ENCODE measurements at regions of chr16 and their contacts with region 1.

Region 1: DNA sequence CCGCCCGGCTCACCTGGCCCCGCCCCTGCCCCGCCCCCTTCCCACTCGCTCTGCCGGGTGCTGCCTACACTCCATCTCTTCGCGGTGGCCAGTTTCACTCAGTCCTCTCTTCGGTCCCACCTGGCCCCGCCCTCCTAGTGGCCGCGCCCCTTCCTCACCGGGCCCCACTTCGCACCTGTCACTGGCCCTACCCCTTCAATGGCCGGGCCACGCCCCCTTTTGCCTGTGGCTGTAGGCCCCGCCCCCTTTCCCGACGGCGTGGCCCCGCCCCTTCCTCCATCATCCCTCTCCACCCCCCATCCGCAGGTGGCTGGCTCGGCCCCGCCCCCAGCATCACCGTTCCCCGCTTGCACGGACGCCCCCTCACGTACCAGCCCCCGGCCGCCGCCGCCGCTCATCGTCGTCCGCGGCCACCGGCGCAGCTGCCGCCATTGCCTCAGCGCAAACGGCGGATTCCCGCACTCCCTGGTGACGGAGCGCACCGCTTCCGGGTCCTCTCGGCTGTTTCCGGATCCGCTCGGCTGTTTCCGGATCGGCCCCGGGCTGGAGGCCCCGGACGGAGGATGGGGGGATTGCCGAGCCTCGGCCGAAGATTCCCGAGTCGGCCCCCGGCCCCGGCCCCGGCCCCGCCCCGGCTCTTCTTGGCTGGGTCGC is at the start of gene RABEP2:
- DNase-seq: peak; percentile 92 to 99 (median 94)
- H3K4me3 ChIP-seq: peak within 1 kb of the TSS; percentile 66 to 95
- H3K4me3 Mint-ChIP-seq: peak within 1 kb of the TSS; percentile 91 to 96 (median 94)
- H3K27ac ChIP-seq: peak within 1 kb of the TSS; percentile 93
- H3K27ac Mint-ChIP-seq: peak within 1 kb of the TSS; percentile 96 to 100 (median 99)
- H3K4me1 ChIP-seq: peaks cover 12% of the 10 kb centered on the region
- H3K4me1 Mint-ChIP-seq: peaks cover 9 to 27% (median 15%) of the 10 kb centered on the region in 4 donors
- H3K27me3 ChIP-seq: no peaks in the 10 kb centered on the region
- H3K27me3 Mint-ChIP-seq: no peaks in the 10 kb centered on the region
- total RNA-seq, gene RABEP2: 25.7 to 29.0 TPM

Region 2: GRCh38 chr16:28823872-28824716 is 100.8 kb before region 1 on chr16:
- CTCF ChIA-PET with region 1: no interaction called
- POLR2A ChIA-PET with region 1: interaction called, 8 read pairs
- intact Hi-C with region 1: loop called (anchors 1 kb)
- DNase-seq: peak; percentile 94 to 99 (median 95)
- H3K4me3 ChIP-seq: peak overlapping the region; percentile 85 to 97
- H3K4me3 Mint-ChIP-seq: peak overlapping the region; percentile 93 to 99 (median 96)
- H3K27ac ChIP-seq: peak overlapping the region; percentile 98
- H3K27ac Mint-ChIP-seq: peak overlapping the region; percentile 96 to 100 (median 98)
- H3K4me1 ChIP-seq: peaks cover 32% of the 10 kb centered on the region
- H3K4me1 Mint-ChIP-seq: peaks cover 27 to 58% (median 40%) of the 10 kb centered on the region in 4 donors
- H3K27me3 ChIP-seq: no peaks in the 10 kb centered on the region
- H3K27me3 Mint-ChIP-seq: peaks cover 0 to 5% of the 10 kb centered on the region in 2 donors

Region 3: DNA sequence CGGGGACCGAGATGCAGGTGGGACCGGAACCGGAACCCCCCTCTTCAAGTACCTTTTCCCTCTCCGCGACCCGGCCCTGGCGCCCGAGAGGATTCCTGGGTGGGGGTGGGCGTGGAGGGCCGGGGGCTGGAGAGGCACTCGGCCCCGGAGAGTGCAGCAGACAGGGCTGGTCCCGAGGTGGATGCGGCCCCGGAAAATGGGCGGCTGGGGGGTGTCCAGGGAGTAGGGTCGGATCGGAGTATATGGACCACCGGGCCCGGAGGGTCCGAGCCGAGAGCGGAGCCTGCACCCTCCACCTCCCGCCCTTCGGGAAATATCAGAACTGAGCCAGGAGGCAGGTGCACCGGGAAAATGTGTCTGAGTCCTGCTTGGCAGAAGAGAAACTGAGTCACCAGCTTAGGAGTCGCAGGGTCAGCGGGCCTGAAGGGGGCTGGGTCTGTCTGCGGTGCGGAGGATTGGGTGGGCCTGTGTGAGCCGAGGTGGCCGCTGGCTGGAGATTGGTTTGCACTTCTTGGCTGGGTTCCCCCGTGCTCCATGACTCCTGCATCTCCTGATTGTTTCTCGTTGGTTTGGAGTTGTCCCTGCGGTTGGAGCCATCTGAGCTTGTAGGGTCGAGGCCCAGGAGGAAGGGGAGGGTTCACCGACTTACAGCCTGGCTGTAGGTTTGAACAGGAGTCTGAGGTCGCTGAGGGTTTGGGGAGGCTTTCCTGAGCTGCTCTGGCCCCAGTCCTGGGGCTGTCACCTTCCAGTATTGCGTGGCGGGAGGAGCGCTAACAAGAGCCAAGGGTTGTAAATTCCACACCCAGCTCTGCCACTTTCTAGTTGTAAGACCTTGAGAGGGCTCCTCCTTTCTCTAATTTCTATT is 60.7 kb before region 1 on chr16:
- CTCF ChIA-PET with region 1: interaction called, 3 read pairs
- POLR2A ChIA-PET with region 1: interaction called, 28 read pairs
- intact Hi-C with region 1: no loop called
- DNase-seq: peak in 3 of 5 donors; percentile 15 to 62 (median 28)
- H3K4me3 ChIP-seq: peak overlapping the region; percentile 36 to 65
- H3K4me3 Mint-ChIP-seq: peak overlapping the region; percentile 95 to 99 (median 98)
- H3K27ac ChIP-seq: peak overlapping the region; percentile 85
- H3K27ac Mint-ChIP-seq: peak overlapping the region; percentile 95 to 100 (median 98)
- H3K4me1 ChIP-seq: peaks cover 25% of the 10 kb centered on the region
- H3K4me1 Mint-ChIP-seq: peaks cover 16 to 35% (median 22%) of the 10 kb centered on the region in 4 donors
- H3K27me3 ChIP-seq: no peaks in the 10 kb centered on the region
- H3K27me3 Mint-ChIP-seq: no peaks in the 10 kb centered on the region

Region 4: DNA sequence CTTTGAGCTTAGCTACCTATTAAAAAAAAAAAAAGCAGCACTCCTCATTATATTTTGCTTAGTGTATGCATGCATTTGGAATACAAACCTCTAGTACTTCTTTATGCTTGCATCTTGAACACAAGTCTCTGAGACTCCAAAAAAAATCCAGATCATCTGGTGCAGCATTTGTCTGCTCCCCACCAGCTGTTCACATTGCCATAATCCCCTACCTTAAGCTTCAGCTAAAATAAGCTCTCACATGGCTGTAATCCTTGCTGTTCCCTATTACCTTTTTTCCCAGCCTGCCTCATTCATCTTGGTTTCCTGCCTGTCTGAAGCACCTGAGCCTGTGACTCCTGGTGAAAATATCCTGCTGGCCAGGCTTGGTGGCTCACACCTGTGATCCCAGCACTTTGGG is 18.4 kb after region 1 on chr16:
- CTCF ChIA-PET with region 1: interaction called, 20 read pairs
- POLR2A ChIA-PET with region 1: interaction called, 14 read pairs
- intact Hi-C with region 1: no loop called
- DNase-seq: no peak
- H3K4me3 ChIP-seq: no peak overlapping the region
- H3K4me3 Mint-ChIP-seq: no peak overlapping the region
- H3K27ac ChIP-seq: no peak overlapping the region
- H3K27ac Mint-ChIP-seq: peak overlapping the region in 1 of 7 donors; percentile 53
- H3K4me1 ChIP-seq: peaks cover 9% of the 10 kb centered on the region
- H3K4me1 Mint-ChIP-seq: peaks cover 6 to 9% (median 7%) of the 10 kb centered on the region in 4 donors
- H3K27me3 ChIP-seq: no peaks in the 10 kb centered on the region
- H3K27me3 Mint-ChIP-seq: no peaks in the 10 kb centered on the region

Region 5: DNA sequence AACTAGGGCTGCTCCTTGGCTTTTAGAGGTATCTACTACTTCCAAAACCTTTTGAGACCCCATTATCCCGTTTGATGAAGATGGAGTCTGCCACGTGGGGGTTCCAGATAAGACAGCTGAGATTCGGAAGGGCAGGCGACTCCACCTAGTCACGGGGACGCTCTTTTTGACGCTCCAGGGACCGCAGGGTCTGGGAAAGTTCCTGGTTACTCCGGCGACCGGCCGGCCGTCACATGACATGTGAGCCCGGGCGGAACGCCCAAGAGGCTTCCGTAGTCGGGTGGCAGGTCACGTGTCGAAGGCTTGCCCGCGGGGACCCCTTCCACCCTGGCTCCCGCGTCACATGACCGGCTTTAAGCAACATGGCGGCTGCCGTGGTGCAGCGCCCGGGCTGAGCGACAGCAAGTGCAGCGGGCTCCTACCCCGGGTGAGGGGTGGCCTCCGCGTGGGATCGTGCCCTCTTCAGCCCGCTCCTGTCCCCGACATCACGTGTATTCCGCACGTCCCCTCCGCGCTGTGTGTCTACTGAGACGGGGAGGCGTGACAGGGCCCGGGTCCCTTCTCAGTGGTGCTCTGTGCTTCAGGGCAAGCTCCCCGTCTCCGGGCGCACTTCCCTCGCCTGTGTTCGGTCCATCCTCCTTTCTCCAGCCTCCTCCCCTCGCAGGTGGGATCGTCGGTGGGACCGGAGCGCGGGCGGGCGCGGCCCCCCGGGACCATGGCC is 49.7 kb after region 1 on chr16 and contains the start of gene SPNS1:
- CTCF ChIA-PET with region 1: interaction called, 3 read pairs
- POLR2A ChIA-PET with region 1: interaction called, 9 read pairs
- intact Hi-C with region 1: loop called (anchors 2 kb)
- DNase-seq: peak; percentile 84 to 90 (median 86)
- H3K4me3 ChIP-seq: peak within 1 kb of the TSS; percentile 65 to 91
- H3K4me3 Mint-ChIP-seq: peak within 1 kb of the TSS; percentile 97 to 99 (median 98)
- H3K27ac ChIP-seq: peak within 1 kb of the TSS; percentile 71
- H3K27ac Mint-ChIP-seq: peak within 1 kb of the TSS; percentile 93 to 99 (median 97)
- H3K4me1 ChIP-seq: peaks cover 32% of the 10 kb centered on the region
- H3K4me1 Mint-ChIP-seq: peaks cover 29 to 45% (median 36%) of the 10 kb centered on the region in 4 donors
- H3K27me3 ChIP-seq: no peaks in the 10 kb centered on the region
- H3K27me3 Mint-ChIP-seq: no peaks in the 10 kb centered on the region
- total RNA-seq, gene SPNS1: 31.0 to 34.4 TPM

Region 6: GRCh38 chr16:29182501-29182900 is 257.6 kb after region 1 on chr16:
- CTCF ChIA-PET with region 1: no interaction called
- POLR2A ChIA-PET with region 1: no interaction called
- intact Hi-C with region 1: no loop called
- DNase-seq: no peak
- H3K4me3 ChIP-seq: no peak overlapping the region
- H3K4me3 Mint-ChIP-seq: no peak overlapping the region
- H3K27ac ChIP-seq: no peak overlapping the region
- H3K27ac Mint-ChIP-seq: no peak overlapping the region
- H3K4me1 ChIP-seq: no peaks in the 10 kb centered on the region
- H3K4me1 Mint-ChIP-seq: no peaks in the 10 kb centered on the region
- H3K27me3 ChIP-seq: no peaks in the 10 kb centered on the region
- H3K27me3 Mint-ChIP-seq: no peaks in the 10 kb centered on the region